Activated T-helper 2 cell treated with anti-CD3 and anti-CD28 coated beads, Interferon-gamma antibody, Interleukin-2, Interleukin-4, amounts not matched to agents 10 μg/mL and 5 μg/mL and 100 μg/mL, durations not matched to agents 14 hours and 24 hours and 36 hours (primary cell): ENCODE measurements at regions of chr2 and their contacts with region 1.

Region 1: DNA sequence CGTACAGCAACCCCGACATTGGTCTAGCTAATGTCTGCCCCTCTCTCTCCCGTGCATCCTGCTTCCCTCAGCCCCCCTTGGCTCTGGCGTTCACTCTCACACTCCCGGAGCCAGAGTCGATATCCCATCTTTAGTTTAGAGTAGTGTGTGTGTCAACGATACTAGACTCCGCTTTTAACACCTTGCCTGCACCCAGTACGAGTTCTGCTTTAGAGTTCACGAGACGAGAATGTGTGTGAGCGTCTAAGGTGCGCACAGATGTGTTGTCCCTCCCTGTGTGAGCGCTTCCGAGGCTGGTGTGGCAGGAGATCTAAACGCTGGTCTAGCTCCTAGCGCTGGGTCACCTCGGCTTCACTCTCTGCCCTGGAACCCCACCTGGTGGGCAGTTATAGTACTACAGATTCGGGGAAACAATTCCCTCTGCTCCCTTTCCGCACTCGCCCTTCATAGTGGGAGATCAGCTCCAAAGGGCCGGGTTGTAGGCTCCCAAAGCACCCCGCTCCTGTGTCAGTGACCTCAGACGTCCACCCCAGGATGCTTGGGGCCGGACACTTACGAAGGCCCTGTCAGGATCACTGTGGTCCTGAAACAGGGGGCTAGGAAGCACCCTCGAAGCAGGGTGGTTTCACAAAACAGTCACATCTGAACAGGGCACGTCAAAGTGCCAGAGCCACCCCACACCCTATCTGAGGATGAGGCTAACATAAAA is 2.6 kb upstream of the CYP26B1 start:
- DNase-seq: peak; percentile 46
- H3K4me3 Mint-ChIP-seq: peak overlapping the region; percentile 19
- H3K27ac Mint-ChIP-seq: peak overlapping the region; percentile 34
- H3K4me1 Mint-ChIP-seq: peaks cover 15% of the 10 kb centered on the region
- H3K27me3 Mint-ChIP-seq: peaks cover 54% of the 10 kb centered on the region

Region 2: DNA sequence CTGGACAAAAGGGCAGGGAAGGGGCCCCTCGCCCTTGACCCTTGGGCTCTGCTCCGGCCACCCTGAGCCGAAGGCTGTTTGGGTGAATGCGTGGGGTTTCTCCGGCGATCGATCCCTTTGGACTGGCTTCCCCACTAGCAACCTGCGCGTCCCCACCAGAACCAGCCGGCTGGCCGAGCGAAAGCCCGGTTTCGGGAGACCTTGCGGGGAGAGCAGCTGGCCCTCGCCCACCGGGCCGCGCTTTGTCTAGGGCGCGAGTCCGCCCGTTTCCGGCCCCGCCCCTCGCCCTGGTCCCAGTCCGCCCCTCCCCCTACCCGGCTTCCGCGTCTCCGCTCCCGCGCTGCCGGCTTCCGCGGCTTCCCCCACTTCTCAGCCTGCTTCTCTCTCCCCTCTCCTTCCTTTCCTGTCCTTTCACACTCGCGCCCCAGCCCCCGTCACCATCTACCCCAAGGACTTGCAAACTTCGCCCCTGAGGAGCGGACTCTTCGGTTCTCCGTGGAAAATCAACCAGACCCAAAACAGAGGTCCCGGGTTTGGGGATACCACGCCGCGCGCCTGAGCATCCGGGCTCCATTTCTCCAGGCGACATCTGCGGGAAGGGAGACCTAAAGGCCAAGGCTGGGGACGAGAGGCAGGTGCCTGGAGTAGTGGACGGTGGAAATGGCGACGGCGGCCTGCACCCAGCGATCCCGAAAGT is 1262.6 kb before region 1 on chr2:
- intact Hi-C with region 1: loop called (anchors 5 kb)
- DNase-seq: no peak
- H3K4me3 Mint-ChIP-seq: peak overlapping the region; percentile 66
- H3K27ac Mint-ChIP-seq: no peak overlapping the region
- H3K4me1 Mint-ChIP-seq: peaks cover 20% of the 10 kb centered on the region
- H3K27me3 Mint-ChIP-seq: peaks cover 84% of the 10 kb centered on the region

Region 3: DNA sequence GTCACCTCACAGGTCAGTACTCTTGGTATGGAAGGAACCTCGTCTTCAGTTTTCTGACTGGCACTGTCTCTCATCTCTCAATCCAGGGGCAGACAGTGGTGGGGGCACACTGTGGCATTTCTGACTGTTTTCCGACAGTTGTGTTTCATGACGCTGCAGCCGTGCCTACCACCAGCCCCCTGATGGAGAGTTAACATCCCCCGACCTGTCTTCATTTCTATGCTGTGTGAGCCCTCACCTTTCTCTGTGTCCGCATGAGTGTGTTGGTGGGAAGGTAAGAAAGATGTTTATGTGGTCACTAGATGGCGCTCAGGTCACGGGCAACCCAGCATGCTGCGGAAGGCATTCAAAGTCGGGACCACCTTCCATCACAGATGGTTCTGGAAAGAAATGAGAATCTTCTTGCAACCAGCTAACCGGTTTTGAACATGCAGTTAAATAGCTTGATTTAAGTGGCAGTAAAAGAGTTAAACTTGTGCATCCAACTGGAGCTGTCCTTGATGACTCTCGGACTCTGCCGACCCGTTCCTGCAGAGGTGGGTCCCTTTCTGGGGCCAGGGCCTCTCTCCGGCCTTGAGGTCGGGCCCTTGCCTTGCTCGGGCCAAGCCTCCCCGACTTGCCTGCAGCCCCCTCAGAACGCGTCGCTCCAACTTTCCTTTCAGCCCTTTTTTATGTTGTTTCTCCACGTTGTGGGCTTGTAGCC is 604.6 kb before region 1 on chr2:
- intact Hi-C with region 1: loop called (anchors 5 kb)
- DNase-seq: peak; percentile 18
- H3K4me3 Mint-ChIP-seq: peak overlapping the region; percentile 13
- H3K27ac Mint-ChIP-seq: no peak overlapping the region
- H3K4me1 Mint-ChIP-seq: peaks cover 2% of the 10 kb centered on the region
- H3K27me3 Mint-ChIP-seq: peaks cover 7% of the 10 kb centered on the region

Region 4: GRCh38 chr2:71923887-71924533 is 226.3 kb before region 1 on chr2:
- intact Hi-C with region 1: loop called (anchors 1 kb)
- DNase-seq: peak; percentile 26
- H3K4me3 Mint-ChIP-seq: no peak overlapping the region
- H3K27ac Mint-ChIP-seq: no peak overlapping the region
- H3K4me1 Mint-ChIP-seq: no peaks in the 10 kb centered on the region
- H3K27me3 Mint-ChIP-seq: no peaks in the 10 kb centered on the region

Region 5: GRCh38 chr2:72394671-72395070 is 244.4 kb after region 1 on chr2:
- intact Hi-C with region 1: no loop called
- DNase-seq: no peak
- H3K4me3 Mint-ChIP-seq: no peak overlapping the region
- H3K27ac Mint-ChIP-seq: no peak overlapping the region
- H3K4me1 Mint-ChIP-seq: no peaks in the 10 kb centered on the region
- H3K27me3 Mint-ChIP-seq: no peaks in the 10 kb centered on the region

Region 6: GRCh38 chr2:72579591-72580180 is 429.4 kb after region 1 on chr2:
- intact Hi-C with region 1: loop called (anchors 1 kb)
- DNase-seq: no peak
- H3K4me3 Mint-ChIP-seq: no peak overlapping the region
- H3K27ac Mint-ChIP-seq: no peak overlapping the region
- H3K4me1 Mint-ChIP-seq: no peaks in the 10 kb centered on the region
- H3K27me3 Mint-ChIP-seq: peaks cover 5% of the 10 kb centered on the region

Region 7: DNA sequence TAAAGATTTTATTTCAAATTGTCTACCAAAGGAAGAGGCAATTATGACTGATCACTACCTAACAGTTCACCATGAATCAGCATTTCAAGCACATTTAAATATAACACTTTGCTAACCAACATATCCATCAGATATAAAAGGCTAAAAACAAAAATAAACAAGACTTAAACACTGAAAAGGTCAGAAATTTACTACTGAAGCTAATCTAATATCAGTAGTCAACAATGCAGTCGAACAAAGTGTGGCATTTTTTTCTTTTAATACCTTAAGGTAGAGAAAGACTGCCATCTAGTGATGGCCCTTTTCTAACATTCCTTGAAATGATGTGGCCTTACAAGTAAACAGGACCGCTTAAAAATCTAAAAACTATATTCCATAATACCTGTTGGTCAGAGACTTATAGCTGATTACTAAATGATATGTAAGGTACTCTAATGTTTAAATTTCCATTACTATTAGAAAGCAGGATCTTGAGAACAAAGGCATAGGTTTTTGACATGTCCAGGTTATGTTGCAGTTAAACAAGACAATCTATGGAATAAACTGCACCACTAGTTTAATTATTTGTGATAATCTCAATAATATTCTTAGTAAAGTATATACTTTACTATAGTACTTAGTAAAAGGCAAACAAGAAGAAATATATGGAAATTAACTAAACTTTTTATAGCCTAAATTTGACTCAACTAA is 595.5 kb after region 1 on chr2:
- intact Hi-C with region 1: loop called (anchors 10 kb)
- DNase-seq: no peak
- H3K4me3 Mint-ChIP-seq: no peak overlapping the region
- H3K27ac Mint-ChIP-seq: no peak overlapping the region
- H3K4me1 Mint-ChIP-seq: no peaks in the 10 kb centered on the region
- H3K27me3 Mint-ChIP-seq: no peaks in the 10 kb centered on the region